Naive thymus-derived CD4-positive, alpha-beta T cell (primary cell): ENCODE measurements at regions of chr21 and their contacts with region 1.

Region 1: DNA sequence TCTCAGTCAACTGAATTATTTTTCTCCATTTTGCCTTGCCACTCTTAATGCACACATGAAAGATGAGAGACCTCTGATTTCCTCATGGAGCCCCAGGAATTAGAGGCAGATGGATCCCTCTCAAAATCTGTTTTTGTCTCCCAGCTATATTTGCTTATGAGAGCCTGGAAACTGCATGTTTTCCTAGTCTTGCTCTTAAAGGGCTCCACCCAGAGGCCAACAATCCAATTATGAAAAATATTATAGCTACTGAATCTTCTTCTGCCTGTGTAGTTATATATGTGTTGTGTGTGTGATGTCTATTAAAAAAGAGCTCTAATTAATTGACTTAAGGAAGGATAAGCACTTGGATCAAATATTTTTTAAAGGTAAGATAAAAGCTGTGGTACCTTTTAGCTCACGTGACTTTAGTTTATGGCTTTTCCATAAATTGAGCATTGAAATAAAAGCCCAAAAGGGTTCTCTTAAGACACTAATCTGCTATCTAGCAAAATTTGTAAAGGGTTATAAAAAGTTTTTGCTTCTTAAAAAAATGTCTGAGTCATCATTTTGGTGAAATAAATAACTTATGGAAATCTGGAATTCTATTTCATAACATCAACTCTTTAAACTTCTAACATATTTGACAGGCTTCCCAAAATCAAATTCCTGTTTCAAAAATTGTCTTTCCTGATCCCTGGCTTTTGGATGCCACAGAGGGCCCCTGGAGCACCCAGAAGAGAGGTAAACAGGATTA is 31.2 kb upstream of the TSPEAR start:
- DNase-seq: peak in 6 of 9 donors; percentile 16 to 61 (median 46)
- ATAC-seq: no peak
- H3K4me3 ChIP-seq: no peak overlapping the region
- H3K4me3 Mint-ChIP-seq: no peak overlapping the region
- H3K27ac ChIP-seq: no peak overlapping the region
- H3K27ac Mint-ChIP-seq: peak overlapping the region in 7 of 9 donors; percentile 29 to 80 (median 75)
- H3K4me1 ChIP-seq: no peaks in the 10 kb centered on the region
- H3K4me1 Mint-ChIP-seq: peaks cover 2 to 11% (median 6%) of the 10 kb centered on the region in 7 donors
- H3K27me3 ChIP-seq: no peaks in the 10 kb centered on the region
- H3K27me3 Mint-ChIP-seq: peaks cover 0 to 33% (median 0%) of the 10 kb centered on the region in 5 donors

Region 2: DNA sequence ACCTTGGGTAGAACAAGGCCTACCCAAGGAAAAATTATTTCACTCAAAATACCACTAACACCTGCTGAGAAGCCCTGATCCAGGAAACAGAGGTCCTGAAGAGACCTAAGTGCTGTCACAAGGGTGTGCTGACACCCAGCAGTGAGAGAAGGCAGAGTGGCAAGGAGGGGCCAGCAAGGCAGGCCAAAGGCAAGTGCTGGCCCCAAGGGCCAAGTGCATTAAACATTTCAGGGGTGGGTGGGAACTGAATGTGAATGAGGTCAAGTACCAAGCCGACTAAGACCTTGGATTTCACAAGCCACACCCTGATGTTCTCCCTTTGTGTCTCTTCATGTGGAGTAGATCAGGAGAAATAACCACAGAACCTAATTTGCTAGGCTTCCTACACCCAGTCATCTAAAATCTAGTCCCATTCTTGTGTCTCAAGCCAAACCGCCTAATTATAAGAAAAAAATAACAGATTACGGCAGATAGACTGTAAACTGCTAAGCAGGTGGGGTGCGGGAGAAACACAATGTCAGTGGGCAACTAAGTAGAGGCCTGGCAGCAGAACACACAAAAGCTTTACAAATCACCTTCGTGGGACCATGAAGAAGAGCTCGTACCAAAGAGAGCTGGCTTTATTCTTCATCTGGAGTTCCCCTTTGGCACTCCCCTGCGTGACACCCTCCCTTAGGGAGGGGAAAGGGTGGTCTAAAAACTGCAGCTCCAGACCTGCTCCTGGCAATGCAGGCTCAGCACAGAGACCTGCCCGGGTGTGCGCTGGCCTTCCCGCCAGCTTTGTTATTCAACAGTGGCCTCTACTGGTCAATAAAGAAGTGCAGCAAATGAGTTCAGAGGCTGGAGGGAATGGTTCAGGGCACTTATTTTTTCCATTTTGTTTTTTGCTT is 50.4 kb after region 1 on chr21:
- CTCF ChIA-PET with region 1: interaction called, 15 read pairs
- POLR2A ChIA-PET with region 1: no interaction called
- intact Hi-C with region 1: loop called in 1 of 2 experiments (anchors 1 kb)
- DNase-seq: peak in 8 of 9 donors; percentile 37 to 73 (median 62)
- ATAC-seq: peak; percentile 96
- H3K4me3 ChIP-seq: no peak overlapping the region
- H3K4me3 Mint-ChIP-seq: no peak overlapping the region
- H3K27ac ChIP-seq: no peak overlapping the region
- H3K27ac Mint-ChIP-seq: peak overlapping the region; percentile 2 to 83 (median 40)
- H3K4me1 ChIP-seq: peaks cover 7 to 10% of the 10 kb centered on the region in 2 donors
- H3K4me1 Mint-ChIP-seq: peaks cover 17 to 64% (median 53%) of the 10 kb centered on the region in 7 donors
- H3K27me3 ChIP-seq: no peaks in the 10 kb centered on the region
- H3K27me3 Mint-ChIP-seq: no peaks in the 10 kb centered on the region